HEK293 (cell line): ENCODE measurements at regions of chr20 and their contacts with region 1.

Region 1: GRCh38 chr20:35092524-35093266 is at the start of gene TRPC4AP:
- H3K4me3 ChIP-seq: peak within 1 kb of the TSS; percentile 98
- H3K27ac ChIP-seq: peak within 1 kb of the TSS; percentile 77
- H3K4me1 ChIP-seq: peaks cover 14% of the 10 kb centered on the region
- CTCF ChIP-seq: peak; percentile 97

Region 2: GRCh38 chr20:35207950-35208611 is 115.4 kb after region 1 on chr20:
- CTCF ChIA-PET with region 1: interaction called, 10 read pairs
- POLR2A ChIA-PET with region 1: no interaction called
- H3K4me3 ChIP-seq: no peak overlapping the region
- H3K27ac ChIP-seq: no peak overlapping the region
- H3K4me1 ChIP-seq: no peaks in the 10 kb centered on the region
- CTCF ChIP-seq: peak; percentile 76